Activated CD4-positive, alpha-beta T cell treated with anti-CD3 and anti-CD28 coated beads for 36 hours (primary cell): ENCODE measurements at regions of chr12 and their contacts with region 1.

Region 1: DNA sequence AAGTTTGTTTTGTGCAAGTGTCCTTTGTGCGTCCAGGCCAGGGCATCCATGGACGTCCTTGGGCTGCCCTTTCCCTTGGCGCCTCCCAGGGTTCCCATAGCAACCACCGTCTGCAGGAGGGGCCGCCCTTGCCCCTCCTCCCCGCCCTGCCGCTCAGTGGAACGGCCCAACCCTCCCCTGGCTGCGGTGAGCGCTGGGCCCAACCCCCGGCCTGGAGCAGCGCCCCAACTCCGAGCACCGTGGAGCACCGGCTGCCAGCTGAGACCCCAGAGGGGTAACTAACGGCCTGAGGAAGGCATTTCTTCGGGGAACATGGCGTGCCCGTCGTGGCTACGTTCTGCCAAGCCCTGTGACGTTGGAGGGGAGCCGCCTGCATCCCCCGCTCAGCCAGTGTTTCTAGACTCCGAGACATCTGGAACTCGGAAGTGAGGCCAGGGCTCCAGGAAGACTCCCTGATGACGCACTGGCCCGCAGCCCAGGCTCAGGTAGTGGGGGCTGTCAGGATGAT is 5.3 kb upstream of the ACACB start:
- DNase-seq: peak; percentile 74
- ATAC-seq: peak; percentile 86
- H3K4me3 Mint-ChIP-seq: peak overlapping the region; percentile 69
- H3K27ac Mint-ChIP-seq: peak overlapping the region; percentile 37
- H3K4me1 Mint-ChIP-seq: peaks cover 29% of the 10 kb centered on the region
- H3K27me3 Mint-ChIP-seq: no peaks in the 10 kb centered on the region

Region 2: DNA sequence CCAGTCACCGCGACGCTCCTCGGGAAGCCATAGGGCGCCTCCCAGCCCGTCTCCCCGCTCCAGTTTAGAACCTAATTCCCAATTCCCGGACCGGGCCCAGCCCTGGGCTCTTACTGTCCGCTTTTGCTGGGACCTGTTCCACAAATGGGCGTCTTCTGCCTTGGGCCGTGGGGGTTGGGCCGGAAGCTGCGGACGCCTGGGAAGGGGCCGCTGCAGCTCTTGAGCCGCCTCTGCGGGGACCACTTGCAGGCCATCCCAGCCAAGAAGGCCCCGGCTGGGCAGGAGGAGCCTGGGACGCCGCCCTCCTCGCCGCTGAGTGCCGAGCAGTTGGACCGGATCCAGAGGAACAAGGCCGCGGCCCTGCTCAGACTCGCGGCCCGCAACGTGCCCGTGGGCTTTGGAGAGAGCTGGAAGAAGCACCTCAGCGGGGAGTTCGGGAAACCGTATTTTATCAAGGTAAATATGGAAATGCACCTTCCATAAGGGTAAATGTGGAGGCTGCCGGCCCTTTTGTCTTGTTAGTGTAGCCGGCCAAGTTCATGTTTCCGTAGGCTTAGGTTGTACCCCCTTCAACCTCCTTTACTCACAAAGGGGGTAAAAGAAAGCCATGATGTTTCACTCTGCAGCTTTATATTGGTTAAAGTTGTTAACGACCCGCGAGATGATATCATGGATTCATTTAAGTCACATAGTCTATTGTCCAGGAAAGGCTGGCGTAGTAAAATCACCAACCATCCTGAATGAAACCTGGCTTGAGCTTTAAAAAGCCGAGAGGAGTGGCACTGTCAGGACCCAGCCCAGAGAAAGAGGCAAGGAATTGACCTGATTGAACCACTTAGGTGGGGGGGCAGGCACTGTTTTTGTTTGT is 12.6 kb before region 1 on chr12:
- CTCF ChIA-PET with region 1: interaction called, 32 read pairs
- POLR2A ChIA-PET with region 1: interaction called, 11 read pairs
- intact Hi-C with region 1: loop called in 1 of 2 experiments (anchors 1 kb)
- DNase-seq: no peak
- ATAC-seq: peak; percentile 11
- H3K4me3 Mint-ChIP-seq: peak overlapping the region; percentile 80
- H3K27ac Mint-ChIP-seq: peak overlapping the region; percentile 42
- H3K4me1 Mint-ChIP-seq: peaks cover 27% of the 10 kb centered on the region
- H3K27me3 Mint-ChIP-seq: no peaks in the 10 kb centered on the region

Region 3: DNA sequence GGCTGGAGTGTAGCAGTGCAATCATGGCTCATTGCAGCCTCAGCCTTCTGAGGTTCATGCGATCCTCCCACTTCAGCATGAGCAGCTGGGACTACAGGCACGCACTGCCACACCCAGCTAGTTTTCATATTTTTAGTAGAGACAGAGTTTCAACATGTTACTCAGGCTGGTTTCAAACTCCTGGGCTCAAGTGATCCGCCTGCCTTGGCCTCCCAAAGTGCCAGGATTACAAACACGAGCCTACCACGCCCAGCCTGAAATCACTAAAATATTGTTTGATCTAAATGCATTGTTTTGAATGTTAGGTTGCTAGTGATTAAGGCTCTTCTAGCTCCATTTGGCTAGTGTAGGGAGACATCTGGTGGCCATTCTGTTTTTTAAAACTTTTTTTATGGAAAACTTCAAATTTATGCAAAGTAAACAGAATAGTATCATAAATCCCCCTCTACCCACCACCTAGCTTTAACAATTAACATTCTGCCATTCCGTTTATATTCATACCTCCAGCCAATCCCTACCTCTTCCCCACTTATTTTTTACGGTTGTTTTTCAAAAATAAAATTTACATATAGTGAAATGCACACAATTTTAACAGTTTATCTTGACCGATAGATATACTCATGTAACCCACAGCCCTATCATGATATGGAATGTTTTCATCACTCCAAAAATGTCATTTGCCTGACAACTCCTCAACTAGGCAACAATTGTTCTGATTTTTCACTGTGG is 274.5 kb after region 1 on chr12:
- CTCF ChIA-PET with region 1: interaction called, 12 read pairs
- POLR2A ChIA-PET with region 1: interaction called, 3 read pairs
- intact Hi-C with region 1: loop called (anchors 1 to 5 kb)
- DNase-seq: peak; percentile 9
- ATAC-seq: peak; percentile 55
- H3K4me3 Mint-ChIP-seq: no peak overlapping the region
- H3K27ac Mint-ChIP-seq: no peak overlapping the region
- H3K4me1 Mint-ChIP-seq: no peaks in the 10 kb centered on the region
- H3K27me3 Mint-ChIP-seq: peaks cover 28% of the 10 kb centered on the region

Region 4: DNA sequence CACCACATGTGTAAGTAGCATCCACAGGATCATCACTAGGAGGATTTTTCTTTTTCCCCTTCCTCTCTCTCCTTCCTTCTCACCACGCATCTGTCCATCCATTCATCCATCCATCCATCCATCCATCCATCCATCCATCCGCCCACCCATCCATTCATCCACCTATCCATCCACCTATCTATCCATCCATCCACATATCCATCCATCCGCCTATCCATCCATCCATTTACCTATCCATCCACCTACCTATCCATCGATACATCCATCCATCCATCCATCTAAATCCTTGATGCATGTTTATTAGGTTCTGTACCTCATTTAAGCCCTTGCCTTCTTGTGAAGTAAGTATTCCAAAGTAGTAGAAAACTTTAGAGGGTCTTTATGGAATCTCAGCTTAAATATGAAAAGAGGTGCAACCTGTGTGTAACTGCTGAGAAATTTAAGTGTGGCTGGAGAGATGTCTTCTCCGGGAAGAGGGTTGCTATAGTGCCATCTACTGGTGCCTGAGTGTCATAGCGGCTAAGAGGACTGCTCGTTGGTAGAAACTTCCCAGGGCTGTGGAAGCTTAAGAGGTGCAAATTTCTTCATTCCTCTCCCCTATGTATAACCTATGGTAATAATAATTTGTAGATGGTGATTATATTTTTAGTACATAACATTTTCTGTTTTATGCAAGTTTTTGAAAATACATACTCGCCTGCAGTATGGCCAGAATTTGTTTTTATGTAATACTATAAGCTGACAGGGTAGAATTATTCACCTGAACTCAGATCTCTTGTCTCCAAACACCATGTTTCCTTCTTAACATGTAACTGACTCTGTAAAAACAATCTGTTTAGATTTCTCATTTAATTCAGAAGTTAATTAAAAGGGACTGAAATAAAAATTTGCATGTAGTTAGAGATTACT is 282.6 kb after region 1 on chr12:
- CTCF ChIA-PET with region 1: interaction called, 17 read pairs
- POLR2A ChIA-PET with region 1: interaction called, 3 read pairs
- intact Hi-C with region 1: loop called (anchors 2 to 5 kb)
- DNase-seq: peak; percentile 36
- ATAC-seq: peak; percentile 61
- H3K4me3 Mint-ChIP-seq: no peak overlapping the region
- H3K27ac Mint-ChIP-seq: no peak overlapping the region
- H3K4me1 Mint-ChIP-seq: no peaks in the 10 kb centered on the region
- H3K27me3 Mint-ChIP-seq: peaks cover 31% of the 10 kb centered on the region